Sciatic nerve (tissue), 2 donors: ENCODE measurements at regions of chr6 and their contacts with region 1.

Region 1: GRCh38 chr6:84227434-84228197 is at the start of gene CEP162:
- DNase-seq: peak; percentile 96
- ATAC-seq: peak; percentile 98
- total RNA-seq, gene CEP162: 17.0 TPM

Region 2: GRCh38 chr6:83885984-83886383 is 341.6 kb before region 1 on chr6:
- intact Hi-C with region 1: loop called (anchors 5 kb)
- DNase-seq: no peak
- ATAC-seq: no peak